Esophagus muscularis mucosa (tissue), 4 donors: ENCODE measurements at regions of chr2 and their contacts with region 1.

Region 1: DNA sequence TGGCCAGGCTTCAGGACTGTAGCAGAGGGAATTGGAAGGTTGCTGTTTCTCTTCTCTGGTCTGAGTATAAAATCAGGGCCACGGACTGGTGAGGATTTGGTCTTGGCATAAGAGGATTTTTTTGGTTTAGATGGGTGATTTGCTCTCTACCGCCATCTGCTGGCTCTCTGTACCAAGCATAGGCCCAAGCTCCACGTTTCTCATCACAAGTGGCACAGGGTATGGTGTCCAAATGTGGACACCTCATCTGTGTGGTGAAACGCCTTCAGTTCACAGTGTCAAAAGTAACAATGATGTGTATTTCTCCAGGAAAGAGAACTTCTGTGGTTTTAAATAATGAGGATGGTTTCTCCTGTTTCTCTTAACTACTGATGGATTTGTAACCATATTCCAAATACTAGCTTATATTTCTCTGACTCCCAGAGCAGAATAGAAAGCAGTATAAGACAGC is 115.1 kb downstream of the EML6 start:
- DNase-seq: no peak
- H3K4me3 ChIP-seq: no peak overlapping the region
- H3K27ac ChIP-seq: no peak overlapping the region
- H3K4me1 ChIP-seq: peaks cover 0 to 6% (median 4%) of the 10 kb centered on the region in 4 donors
- H3K27me3 ChIP-seq: no peaks in the 10 kb centered on the region
- CTCF ChIP-seq: peak; percentile 80 to 93 (median 88)
- EP300 ChIP-seq: no peak
- POLR2A ChIP-seq: no peak

Region 2: DNA sequence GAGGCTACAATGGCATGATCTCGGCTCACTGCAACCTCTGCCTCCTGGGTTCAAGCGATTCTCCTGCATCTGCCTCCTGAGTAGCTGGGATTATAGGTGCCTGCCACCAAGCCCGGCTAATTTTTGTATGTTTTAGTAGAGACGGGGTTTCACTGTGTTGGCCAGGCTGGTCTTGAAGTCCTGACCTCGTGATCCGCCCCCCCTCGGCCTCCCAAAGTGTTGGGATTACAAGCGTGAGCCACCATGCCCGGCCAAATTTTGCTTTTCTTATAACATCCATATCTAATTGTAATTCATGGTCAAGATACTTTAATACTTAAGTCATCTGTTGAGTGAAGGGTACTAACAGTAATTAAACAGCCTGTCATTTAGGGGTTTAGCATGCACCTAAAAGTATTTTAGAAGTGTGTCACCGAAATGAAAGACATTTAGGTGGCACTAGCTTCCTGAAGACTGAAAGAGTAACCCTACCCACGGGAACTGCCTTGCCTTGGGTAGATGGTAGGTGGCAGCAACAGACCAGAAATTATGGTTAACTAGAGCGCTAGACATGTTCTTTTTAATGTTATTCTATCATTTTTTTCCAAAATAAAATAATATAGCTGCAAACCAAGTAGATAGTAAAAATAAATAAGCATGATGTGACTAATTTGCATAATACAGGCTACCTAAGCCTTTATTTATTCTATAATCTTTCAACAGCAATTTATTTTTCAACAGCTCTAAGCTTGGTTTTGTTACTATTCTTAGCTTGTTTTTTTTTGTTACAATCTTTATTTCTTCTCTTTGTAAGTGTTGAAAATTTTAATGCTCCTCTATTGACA is 731.8 kb before region 1 on chr2:
- intact Hi-C with region 1: loop called (anchors 5 kb)
- DNase-seq: peak; percentile 55
- H3K4me3 ChIP-seq: no peak overlapping the region
- H3K27ac ChIP-seq: no peak overlapping the region
- H3K4me1 ChIP-seq: peaks cover 3 to 25% (median 15%) of the 10 kb centered on the region in 4 donors
- H3K27me3 ChIP-seq: no peaks in the 10 kb centered on the region
- CTCF ChIP-seq: peak; percentile 59 to 68 (median 65)
- EP300 ChIP-seq: no peak
- POLR2A ChIP-seq: no peak

Region 3: GRCh38 chr2:54522624-54523281 is 315.9 kb before region 1 on chr2:
- intact Hi-C with region 1: loop called (anchors 10 kb)
- DNase-seq: no peak
- H3K4me3 ChIP-seq: no peak overlapping the region
- H3K27ac ChIP-seq: no peak overlapping the region
- H3K4me1 ChIP-seq: peaks cover 85 to 91% (median 88%) of the 10 kb centered on the region in 4 donors
- H3K27me3 ChIP-seq: no peaks in the 10 kb centered on the region
- CTCF ChIP-seq: peak; percentile 52 to 61 (median 58)
- EP300 ChIP-seq: no peak
- POLR2A ChIP-seq: no peak

Region 4: GRCh38 chr2:54597153-54597848 is 241.3 kb before region 1 on chr2:
- intact Hi-C with region 1: no loop called
- DNase-seq: no peak
- H3K4me3 ChIP-seq: no peak overlapping the region
- H3K27ac ChIP-seq: peak overlapping the region; percentile 53 to 67 (median 60)
- H3K4me1 ChIP-seq: peaks cover 75 to 88% (median 77%) of the 10 kb centered on the region in 4 donors
- H3K27me3 ChIP-seq: no peaks in the 10 kb centered on the region
- CTCF ChIP-seq: no peak
- EP300 ChIP-seq: no peak
- POLR2A ChIP-seq: no peak

Region 5: GRCh38 chr2:54723131-54723995 is 115.2 kb before region 1 on chr2 and contains the start of gene EML6:
- intact Hi-C with region 1: loop called (anchors 5 kb)
- DNase-seq: peak; percentile 99
- H3K4me3 ChIP-seq: peak within 1 kb of the TSS; percentile 71 to 86 (median 79)
- H3K27ac ChIP-seq: peak within 1 kb of the TSS; percentile 72 to 84 (median 82)
- H3K4me1 ChIP-seq: peaks cover 4 to 23% (median 23%) of the 10 kb centered on the region in 4 donors
- H3K27me3 ChIP-seq: peaks cover 0 to 9% (median 0%) of the 10 kb centered on the region in 4 donors
- CTCF ChIP-seq: peak in 2 of 3 experiments; percentile 7 to 31
- EP300 ChIP-seq: no peak
- POLR2A ChIP-seq: peak; percentile 58
- total RNA-seq, gene EML6: 0.75 to 4.6 (median 0.89) TPM

Region 6: DNA sequence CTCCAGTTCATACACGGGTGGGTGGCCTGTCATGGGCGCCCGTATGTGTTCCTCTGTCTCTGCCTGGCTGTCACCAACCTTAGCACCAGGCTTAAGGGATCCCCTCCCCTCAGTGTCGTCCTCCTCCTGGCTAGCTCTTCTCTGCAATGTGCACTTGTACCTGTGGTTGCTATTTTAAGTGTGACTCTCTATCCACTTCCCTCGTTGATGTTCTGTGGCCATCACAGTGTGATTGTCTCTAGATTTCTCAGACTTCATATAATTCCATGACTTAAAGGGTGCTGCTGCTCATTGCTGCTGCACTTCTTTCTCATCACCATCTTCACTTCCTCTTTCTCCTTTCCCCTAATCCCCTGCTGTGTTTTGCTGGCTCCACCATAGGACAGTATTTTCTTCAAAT is 28.3 kb after region 1 on chr2:
- intact Hi-C with region 1: no loop called
- DNase-seq: no peak
- H3K4me3 ChIP-seq: no peak overlapping the region
- H3K27ac ChIP-seq: no peak overlapping the region
- H3K4me1 ChIP-seq: no peaks in the 10 kb centered on the region
- H3K27me3 ChIP-seq: no peaks in the 10 kb centered on the region
- CTCF ChIP-seq: no peak
- EP300 ChIP-seq: no peak
- POLR2A ChIP-seq: no peak